ENCODE measurements at regions of chr5 and their contacts with region 1.

Region 1: DNA sequence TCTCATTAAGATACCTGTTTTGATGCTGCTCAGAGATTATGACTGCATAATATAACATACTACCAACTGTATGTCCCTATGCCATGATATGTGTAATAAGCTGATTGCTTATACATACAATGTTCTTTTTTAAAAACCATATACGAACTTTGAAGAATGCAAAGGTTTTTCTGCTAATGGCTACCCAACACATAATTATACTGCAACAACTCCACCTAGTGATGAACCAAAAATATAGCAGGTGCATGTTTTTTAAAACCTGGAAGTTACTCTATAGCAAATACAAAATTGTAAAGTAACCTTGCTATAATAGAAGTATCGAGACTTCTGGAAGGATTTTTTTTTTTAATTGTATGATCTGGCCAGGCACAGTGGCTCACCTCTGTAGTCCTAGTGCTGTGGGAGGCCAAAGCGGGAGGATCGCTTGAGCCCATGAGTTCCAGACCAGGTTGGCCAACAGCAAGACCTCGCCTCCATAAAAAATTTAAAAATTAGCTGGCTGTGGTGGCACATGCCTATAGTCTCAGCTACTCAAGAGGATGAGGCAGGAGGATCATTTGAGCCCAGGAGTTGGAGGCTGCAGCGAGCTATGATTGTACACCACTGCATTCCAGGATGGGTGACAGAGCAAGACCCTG is 49.1 kb downstream of the HOMER1 start:
- DNase-seq: peak; percentile 60
- H3K4me3 ChIP-seq: no peak overlapping the region
- H3K27ac ChIP-seq: no peak overlapping the region
- H3K4me1 ChIP-seq: no peaks in the 10 kb centered on the region
- CTCF ChIP-seq: peak; percentile 96

Region 2: GRCh38 chr5:79025054-79025472 is 439.8 kb before region 1 on chr5:
- CTCF ChIA-PET with region 1: interaction called, 5 read pairs
- POLR2A ChIA-PET with region 1: no interaction called
- intact Hi-C with region 1: loop called (anchors 1 kb)
- DNase-seq: peak; percentile 59
- H3K4me3 ChIP-seq: no peak overlapping the region
- H3K27ac ChIP-seq: no peak overlapping the region
- H3K4me1 ChIP-seq: no peaks in the 10 kb centered on the region
- CTCF ChIP-seq: peak; percentile 100

Region 3: DNA sequence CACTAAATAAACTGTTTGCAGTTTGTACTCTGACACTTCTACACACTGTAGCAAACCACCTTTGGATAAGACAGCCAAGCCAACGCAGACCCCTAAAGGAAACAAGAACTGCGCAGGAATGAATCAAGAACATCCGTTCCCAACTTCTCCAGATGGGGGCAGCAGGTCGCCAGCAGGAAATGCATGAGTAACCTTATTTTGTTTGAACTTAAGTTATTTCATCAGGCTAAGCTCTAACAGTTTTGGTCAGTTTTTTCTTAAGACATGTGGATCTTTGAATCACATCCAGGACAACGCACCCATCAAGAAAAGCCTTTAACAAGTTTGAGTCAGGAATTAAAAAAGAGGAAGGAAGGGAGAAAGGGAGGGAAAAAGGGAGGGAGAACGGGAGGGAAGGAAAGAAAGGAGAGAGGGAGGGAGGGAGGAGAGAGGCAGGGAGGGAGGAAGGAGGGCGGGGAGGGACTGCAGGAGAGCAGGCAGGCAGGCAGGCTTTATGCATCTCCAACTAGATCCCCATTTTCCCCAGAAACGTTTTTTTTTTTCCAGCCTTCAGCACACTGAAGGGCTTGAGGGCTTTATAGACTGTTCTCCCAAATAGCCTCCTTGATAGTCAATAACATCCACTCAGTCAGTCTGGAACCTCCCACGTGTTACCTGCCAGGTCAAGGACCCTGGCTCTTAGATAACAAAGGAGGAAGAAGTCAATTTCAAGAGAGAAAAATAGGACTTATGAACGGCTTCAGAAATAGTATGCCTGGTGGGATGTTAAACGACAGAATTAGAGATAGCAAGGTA is 331.0 kb before region 1 on chr5:
- CTCF ChIA-PET with region 1: interaction called, 4 read pairs
- POLR2A ChIA-PET with region 1: interaction called, 5 read pairs
- intact Hi-C with region 1: loop called (anchors 1 kb)
- DNase-seq: peak; percentile 81
- H3K4me3 ChIP-seq: peak overlapping the region; percentile 6
- H3K27ac ChIP-seq: no peak overlapping the region
- H3K4me1 ChIP-seq: peaks cover 10% of the 10 kb centered on the region
- CTCF ChIP-seq: peak; percentile 81

Region 4: DNA sequence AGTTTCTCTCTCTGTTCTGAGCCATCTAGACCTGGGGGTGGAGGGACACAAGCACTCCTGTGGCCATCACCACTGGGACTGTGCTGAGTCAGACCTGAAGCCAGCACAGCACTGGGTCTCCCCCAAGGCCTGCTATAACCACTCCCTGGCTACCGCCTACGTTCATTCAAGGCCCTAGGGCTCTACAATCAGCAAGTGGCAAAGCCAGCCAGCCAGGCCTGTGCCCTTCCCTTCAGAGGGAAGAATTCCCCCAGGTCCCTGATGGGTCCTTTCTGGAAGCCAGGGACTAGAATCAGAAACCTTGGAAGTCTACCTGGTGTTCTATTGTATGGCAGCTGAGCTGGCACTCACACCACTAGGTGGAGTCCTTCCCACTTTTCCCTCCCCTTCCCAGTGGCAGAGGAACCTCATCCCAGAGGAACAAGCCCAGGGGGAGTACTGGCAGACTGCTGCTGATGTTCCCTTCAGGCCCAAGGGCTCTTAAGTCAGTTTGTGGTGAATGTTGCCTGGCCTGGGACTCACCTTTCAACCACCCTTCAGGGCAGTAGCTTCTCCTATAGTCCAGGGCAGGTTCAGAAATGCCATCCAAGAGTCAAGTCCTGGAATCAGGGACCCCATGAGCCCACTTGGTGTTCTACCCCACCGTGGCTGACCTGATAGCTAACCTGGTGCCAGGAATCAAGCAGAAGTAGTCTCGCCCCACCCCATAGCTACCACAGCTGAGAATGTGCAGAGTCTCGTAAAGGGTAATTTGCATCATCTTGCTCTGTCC is 208.8 kb before region 1 on chr5:
- CTCF ChIA-PET with region 1: interaction called, 3 read pairs
- POLR2A ChIA-PET with region 1: interaction called, 4 read pairs
- intact Hi-C with region 1: loop called (anchors 1 kb)
- DNase-seq: no peak
- H3K4me3 ChIP-seq: peak overlapping the region; percentile 0
- H3K27ac ChIP-seq: peak overlapping the region; percentile 40
- H3K4me1 ChIP-seq: peaks cover 36% of the 10 kb centered on the region
- CTCF ChIP-seq: peak; percentile 87

Region 5: GRCh38 chr5:79795790-79796398 is 331.1 kb after region 1 on chr5:
- CTCF ChIA-PET with region 1: no interaction called
- POLR2A ChIA-PET with region 1: no interaction called
- intact Hi-C with region 1: no loop called
- DNase-seq: no peak
- H3K4me3 ChIP-seq: no peak overlapping the region
- H3K27ac ChIP-seq: no peak overlapping the region
- H3K4me1 ChIP-seq: peaks cover 2% of the 10 kb centered on the region
- CTCF ChIP-seq: no peak

Measured in OCI-LY7 (cell line).